ENCODE measurements at regions of chr12 and their contacts with region 1.

Region 1: GRCh38 chr12:54214553-54215406 is 26.0 kb upstream of the SMUG1 start:
- DNase-seq: peak; percentile 97
- ATAC-seq: peak; percentile 71
- H3K4me3 Mint-ChIP-seq: peak overlapping the region; percentile 16; the same call in 1 of the 2 replicates
- H3K27ac Mint-ChIP-seq: no peak overlapping the region
- H3K4me1 Mint-ChIP-seq: peaks cover 33% of the 10 kb centered on the region
- H3K27me3 Mint-ChIP-seq: peaks cover 79% of the 10 kb centered on the region
- CTCF ChIP-seq: peak; percentile 96

Region 2: DNA sequence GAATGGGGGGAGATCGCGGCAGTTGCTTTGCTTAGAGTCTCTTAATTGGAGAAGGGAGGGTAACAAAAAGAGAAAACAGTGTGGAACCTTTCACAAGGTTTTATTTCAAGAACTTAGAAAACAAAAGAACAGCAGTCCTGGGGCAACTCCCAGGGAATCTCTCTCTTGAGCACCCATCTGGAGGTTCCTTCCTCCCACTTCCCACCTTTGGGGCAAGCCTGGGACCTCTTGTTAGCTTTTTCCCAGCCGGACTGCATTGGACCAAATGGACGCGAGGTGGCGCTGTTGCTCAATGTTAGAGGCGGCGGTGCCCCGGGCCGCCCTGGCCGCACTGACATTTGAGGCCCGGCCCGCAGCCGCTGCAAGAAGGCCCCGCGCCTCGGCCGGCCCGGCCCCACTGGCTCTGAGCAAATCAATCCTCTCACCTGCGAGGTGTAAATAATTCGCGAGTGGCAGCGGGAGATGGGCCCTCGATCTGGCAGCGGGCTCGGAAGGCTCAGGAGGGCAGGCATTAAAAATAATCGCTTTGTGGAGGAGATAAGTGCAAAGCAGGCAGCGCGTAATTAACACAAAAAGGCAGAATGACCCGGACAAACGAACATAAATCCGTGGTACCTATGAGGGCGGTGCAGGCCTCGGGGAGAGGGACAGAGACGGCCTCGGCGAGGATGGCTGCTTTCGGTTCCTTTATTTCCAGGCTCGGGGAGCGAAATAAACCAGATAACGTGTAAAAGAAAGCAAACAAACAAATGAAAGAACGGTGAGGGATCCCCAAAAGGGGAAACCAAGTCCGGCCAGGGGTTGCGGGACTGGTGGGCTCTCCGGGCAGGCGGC is 208.7 kb before region 1 on chr12:
- CTCF ChIA-PET with region 1: interaction called, 107 read pairs
- POLR2A ChIA-PET with region 1: no interaction called
- DNase-seq: peak; percentile 96
- ATAC-seq: peak; percentile 69
- H3K4me3 Mint-ChIP-seq: peak overlapping the region; percentile 34
- H3K27ac Mint-ChIP-seq: no peak overlapping the region
- H3K4me1 Mint-ChIP-seq: peaks cover 20% of the 10 kb centered on the region
- H3K27me3 Mint-ChIP-seq: peaks cover 100% of the 10 kb centered on the region
- CTCF ChIP-seq: peak; percentile 96

Region 3: GRCh38 chr12:54075974-54076373 is 138.8 kb before region 1 on chr12:
- CTCF ChIA-PET with region 1: interaction called, 3 read pairs
- POLR2A ChIA-PET with region 1: interaction called, 10 read pairs
- DNase-seq: peak; percentile 64
- ATAC-seq: peak; percentile 98
- H3K4me3 Mint-ChIP-seq: peak overlapping the region; percentile 54
- H3K27ac Mint-ChIP-seq: peak overlapping the region; percentile 98
- H3K4me1 Mint-ChIP-seq: peaks cover 61% of the 10 kb centered on the region
- H3K27me3 Mint-ChIP-seq: peaks cover 87% of the 10 kb centered on the region
- CTCF ChIP-seq: no peak

Region 4: GRCh38 chr12:54259194-54260011 is 44.6 kb after region 1 on chr12:
- CTCF ChIA-PET with region 1: interaction called, 19 read pairs
- POLR2A ChIA-PET with region 1: interaction called, 3 read pairs
- DNase-seq: peak; percentile 91
- ATAC-seq: peak; percentile 94
- H3K4me3 Mint-ChIP-seq: peak overlapping the region; percentile 66
- H3K27ac Mint-ChIP-seq: peak overlapping the region; percentile 99
- H3K4me1 Mint-ChIP-seq: peaks cover 63% of the 10 kb centered on the region
- H3K27me3 Mint-ChIP-seq: no peaks in the 10 kb centered on the region
- CTCF ChIP-seq: no peak

Region 5: GRCh38 chr12:54359033-54359761 is 144.4 kb after region 1 on chr12:
- CTCF ChIA-PET with region 1: interaction called, 57 read pairs
- POLR2A ChIA-PET with region 1: no interaction called
- DNase-seq: peak; percentile 96
- ATAC-seq: peak; percentile 77
- H3K4me3 Mint-ChIP-seq: no peak overlapping the region
- H3K27ac Mint-ChIP-seq: no peak overlapping the region
- H3K4me1 Mint-ChIP-seq: peaks cover 7% of the 10 kb centered on the region
- H3K27me3 Mint-ChIP-seq: peaks cover 8% of the 10 kb centered on the region
- CTCF ChIP-seq: no peak

Measured in WTC11 (cell line).